Left lung (tissue), 14 donors: ENCODE measurements at regions of chr13 and their contacts with region 1.

Region 1: DNA sequence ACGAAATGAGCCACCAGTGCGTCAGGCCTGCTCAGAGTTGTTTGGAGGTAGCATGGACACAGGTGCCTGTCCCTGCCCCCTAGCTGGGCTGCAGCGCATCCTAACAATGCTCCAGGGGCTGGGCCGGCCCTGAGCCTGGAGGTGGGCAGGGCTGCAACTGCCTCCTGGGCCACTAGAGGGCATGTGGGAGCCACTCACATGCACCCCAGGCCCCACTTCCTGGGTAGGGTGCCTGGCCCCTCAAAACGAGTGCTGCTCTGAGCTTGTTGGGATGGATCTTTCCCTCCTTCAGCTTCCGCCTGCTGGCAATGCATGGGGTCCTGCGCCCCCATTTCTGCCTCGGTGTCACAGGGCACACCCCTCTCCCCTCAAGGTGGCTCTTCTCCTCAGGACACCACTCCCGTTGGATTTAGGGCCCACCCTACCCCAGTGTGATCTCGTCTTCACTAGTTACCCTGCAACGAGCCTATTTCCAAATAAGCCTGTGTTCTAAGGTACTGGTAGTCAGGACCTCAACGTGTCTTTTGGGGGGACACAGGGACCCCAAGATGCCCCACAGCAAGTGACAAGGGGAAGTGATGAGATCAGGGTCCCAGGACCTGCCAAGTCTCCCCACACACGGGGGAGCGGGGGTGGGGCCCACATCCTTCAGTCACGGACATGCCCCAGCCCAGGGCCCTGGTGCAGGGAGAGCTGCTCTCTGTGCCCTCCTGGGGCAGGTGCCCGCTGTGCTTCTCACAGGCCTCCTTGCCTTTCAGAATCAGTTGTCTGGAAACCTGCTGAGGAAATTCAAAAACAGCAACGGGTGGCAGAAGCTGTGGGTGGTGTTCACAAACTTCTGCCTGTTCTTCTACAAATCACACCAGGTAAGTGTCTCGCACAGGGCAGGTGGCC is 131.3 kb downstream of the STK24 start:
- DNase-seq: peak; percentile 46 to 90 (median 61)
- ATAC-seq: peak; percentile 92
- H3K4me3 ChIP-seq: no peak overlapping the region
- H3K27ac ChIP-seq: peak overlapping the region in 1 of 2 donors; percentile 50
- H3K4me1 ChIP-seq: peaks cover 0 to 10% of the 10 kb centered on the region in 2 donors
- H3K27me3 ChIP-seq: no peaks in the 10 kb centered on the region
- CTCF ChIP-seq: peak; percentile 97 to 99

Region 2: DNA sequence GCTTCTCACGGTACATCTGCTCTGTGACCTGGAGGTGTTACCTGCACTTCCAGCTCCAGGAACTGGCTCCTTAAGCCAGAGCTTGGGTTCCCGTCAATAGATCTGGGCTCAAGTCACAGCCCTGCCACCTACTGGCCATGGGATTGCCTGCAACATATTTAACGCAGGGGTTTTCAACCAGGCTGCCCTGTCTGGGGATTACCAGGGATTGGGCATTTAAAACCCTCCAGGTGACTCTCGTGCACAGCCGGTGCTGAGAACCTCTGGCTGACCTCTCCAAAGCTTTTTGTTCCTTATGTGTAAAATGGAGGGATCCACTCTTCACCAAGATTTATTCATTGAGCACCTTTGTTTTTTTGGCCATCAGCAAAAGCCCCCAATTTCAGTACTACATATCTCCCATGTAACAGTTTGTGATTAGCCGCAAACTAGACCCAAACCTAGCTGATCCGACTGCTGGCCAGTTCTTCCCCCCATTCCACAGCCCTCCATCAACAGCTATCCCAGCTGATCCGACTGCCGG is 207.9 kb after region 1 on chr13:
- intact Hi-C with region 1: loop called in 1 of 2 experiments (anchors 5 kb)
- DNase-seq: peak in 3 of 4 donors; percentile 74 to 83 (median 76)
- ATAC-seq: peak; percentile 94
- H3K4me3 ChIP-seq: no peak overlapping the region
- H3K27ac ChIP-seq: no peak overlapping the region
- H3K4me1 ChIP-seq: peaks cover 0 to 14% of the 10 kb centered on the region in 2 donors
- H3K27me3 ChIP-seq: no peaks in the 10 kb centered on the region
- CTCF ChIP-seq: peak; percentile 80 to 90